Activated B cell treated with CpG ODN at 0.5 μM for 24 hours (primary cell): ENCODE measurements at regions of chr22 and their contacts with region 1.

Region 1: GRCh38 chr22:30591588-30592359 is at the start of gene PES1:
- DNase-seq: peak; percentile 87
- ATAC-seq: peak; percentile 95
- H3K4me3 Mint-ChIP-seq: no peak within 1 kb of the TSS
- H3K27ac Mint-ChIP-seq: no peak within 1 kb of the TSS
- H3K4me1 Mint-ChIP-seq: no peaks in the 10 kb centered on the region
- H3K27me3 Mint-ChIP-seq: peaks cover 1% of the 10 kb centered on the region
- CTCF ChIP-seq: no peak
- total RNA-seq, gene PES1: 124 TPM in 2 replicates

Region 2: DNA sequence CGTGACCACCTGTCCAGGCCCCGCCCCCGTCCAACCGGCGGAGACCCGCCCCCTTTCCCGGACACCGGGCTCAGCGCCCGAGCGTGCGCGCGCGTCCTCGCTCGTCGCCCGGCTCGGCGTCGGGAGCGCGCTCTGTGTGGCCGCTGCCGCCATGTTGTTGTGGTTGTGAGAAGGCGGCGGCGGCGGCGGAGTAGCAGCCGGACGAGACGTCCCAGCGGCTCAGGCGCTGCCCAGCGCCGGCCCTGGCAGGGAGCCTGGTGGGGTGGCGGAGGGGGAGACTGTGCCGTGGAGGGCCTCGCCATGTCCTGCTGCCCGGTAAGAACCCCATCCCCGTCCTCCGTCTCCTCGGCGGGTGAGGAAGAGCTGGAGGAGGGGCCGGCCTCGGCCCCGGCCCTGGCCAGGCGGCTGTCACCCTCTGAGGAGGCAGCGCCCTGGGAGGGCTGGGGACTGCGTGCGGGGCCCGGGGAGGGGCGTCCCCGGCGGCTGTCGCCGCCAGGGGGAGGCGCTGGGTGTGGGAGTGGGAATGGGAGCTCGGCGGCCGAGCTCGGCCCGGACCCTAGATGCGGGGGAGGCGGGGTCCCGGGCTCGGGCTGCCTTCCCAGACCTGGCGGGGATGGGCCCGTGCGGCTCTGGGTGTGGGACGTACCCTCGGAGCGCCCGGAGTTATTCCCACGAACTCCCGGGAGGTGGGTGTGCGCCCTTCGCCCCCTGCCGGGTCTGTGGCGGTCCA is 708.6 kb before region 1 on chr22 and contains the start of gene MTMR3:
- CTCF ChIA-PET with region 1: no interaction called
- POLR2A ChIA-PET with region 1: no interaction called
- intact Hi-C with region 1: loop called (anchors 5 kb)
- DNase-seq: peak; percentile 98
- ATAC-seq: peak; percentile 82
- H3K4me3 Mint-ChIP-seq: peak within 1 kb of the TSS; percentile 92
- H3K27ac Mint-ChIP-seq: peak within 1 kb of the TSS; percentile 83
- H3K4me1 Mint-ChIP-seq: peaks cover 10% of the 10 kb centered on the region
- H3K27me3 Mint-ChIP-seq: peaks cover 3% of the 10 kb centered on the region
- CTCF ChIP-seq: no peak
- total RNA-seq, gene MTMR3: 34.8 and 36.6 TPM in 2 replicates

Region 3: DNA sequence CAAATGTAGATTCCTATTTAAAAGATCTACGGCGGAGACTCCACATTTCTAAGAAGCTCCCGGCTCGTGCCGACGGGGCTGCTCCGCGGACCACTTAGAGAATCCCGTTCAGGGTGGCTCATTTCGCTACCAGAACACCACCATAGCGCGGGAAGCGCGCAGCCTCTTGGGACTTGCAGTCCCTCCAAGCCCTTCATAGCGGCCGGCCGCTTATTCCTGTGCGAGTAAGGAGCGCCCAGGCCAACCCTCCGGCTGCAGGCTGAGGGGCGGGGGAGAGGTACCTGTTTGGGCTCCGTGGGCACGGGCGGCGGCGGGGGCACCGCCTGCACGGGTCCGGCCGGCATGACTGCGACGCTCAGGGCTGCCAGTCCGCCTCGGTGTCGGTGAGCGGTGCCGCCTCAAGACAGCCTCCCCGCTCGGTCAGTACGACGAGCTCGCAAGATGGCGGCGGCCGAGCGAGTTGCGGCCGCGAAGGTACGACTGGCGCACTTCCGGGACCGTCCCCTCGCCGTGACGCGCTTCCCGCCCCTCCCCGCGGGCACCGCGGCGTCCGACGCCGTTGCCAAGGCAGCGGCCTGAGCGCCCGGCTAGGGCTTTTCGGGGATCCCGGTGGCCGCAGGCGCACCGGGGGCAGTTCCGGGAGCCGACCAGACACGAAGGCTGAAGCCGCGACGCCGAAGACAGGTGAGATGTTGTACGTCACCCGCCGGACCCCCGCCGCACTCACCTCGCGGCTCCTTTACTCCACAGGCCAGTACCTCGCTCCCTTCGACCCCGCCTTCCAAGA is 235.1 kb before region 1 on chr22 and contains the starts of genes CCDC157 and SF3A1:
- CTCF ChIA-PET with region 1: no interaction called
- POLR2A ChIA-PET with region 1: interaction called, 11 read pairs
- intact Hi-C with region 1: no loop called
- DNase-seq: peak; percentile 88
- ATAC-seq: peak; percentile 86
- H3K4me3 Mint-ChIP-seq: peak within 1 kb of the TSS; percentile 92
- H3K27ac Mint-ChIP-seq: peak within 1 kb of the TSS; percentile 76
- H3K4me1 Mint-ChIP-seq: peaks cover 43% of the 10 kb centered on the region
- H3K27me3 Mint-ChIP-seq: no peaks in the 10 kb centered on the region
- CTCF ChIP-seq: no peak
- total RNA-seq, gene CCDC157: 1.8 and 2.9 TPM in 2 replicates
- total RNA-seq, gene SF3A1: 263 and 269 TPM in 2 replicates

Region 4: GRCh38 chr22:30667494-30668385 is 76.0 kb after region 1 on chr22 and contains the start of gene DUSP18:
- CTCF ChIA-PET with region 1: no interaction called
- POLR2A ChIA-PET with region 1: no interaction called
- intact Hi-C with region 1: loop called (anchors 1 kb)
- DNase-seq: peak; percentile 95
- ATAC-seq: peak; percentile 94
- H3K4me3 Mint-ChIP-seq: peak within 1 kb of the TSS; percentile 97
- H3K27ac Mint-ChIP-seq: peak within 1 kb of the TSS; percentile 86
- H3K4me1 Mint-ChIP-seq: peaks cover 18% of the 10 kb centered on the region
- H3K27me3 Mint-ChIP-seq: no peaks in the 10 kb centered on the region
- CTCF ChIP-seq: no peak
- total RNA-seq, gene DUSP18: 12.0 and 13.5 TPM in 2 replicates

Region 5: DNA sequence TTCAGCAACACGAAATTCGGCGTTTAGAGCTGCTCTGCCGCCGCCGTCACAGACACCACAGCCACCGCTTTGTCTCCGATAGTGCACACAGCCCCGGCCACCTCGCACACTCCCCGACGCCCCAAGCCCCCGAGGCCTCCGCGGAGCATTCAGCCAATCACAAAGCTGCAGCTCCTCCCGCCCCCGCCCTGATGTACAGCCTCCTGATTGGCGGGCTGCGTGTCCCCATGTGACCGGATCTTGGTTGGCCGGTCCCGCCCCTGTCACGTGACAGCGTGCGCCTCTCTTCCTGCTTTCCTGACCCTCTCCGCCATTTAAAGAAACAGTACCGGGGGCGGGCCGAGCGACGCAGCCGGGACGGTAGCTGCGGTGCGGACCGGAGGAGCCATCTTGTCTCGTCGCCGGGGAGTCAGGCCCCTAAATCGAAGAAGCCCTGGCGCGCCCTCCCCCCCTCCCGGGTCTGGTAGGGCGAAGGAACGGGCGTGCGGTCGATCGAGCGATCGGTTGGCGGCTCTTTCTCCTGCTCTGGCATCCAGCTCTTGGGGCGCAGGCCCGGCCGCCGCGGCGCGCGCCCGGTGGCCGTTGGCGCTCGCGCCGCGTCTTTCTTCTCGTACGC is 377.3 kb after region 1 on chr22 and contains the start of gene TUG1:
- CTCF ChIA-PET with region 1: no interaction called
- POLR2A ChIA-PET with region 1: interaction called, 8 read pairs
- intact Hi-C with region 1: loop called (anchors 1 kb)
- DNase-seq: peak; percentile 93
- ATAC-seq: peak; percentile 92
- H3K4me3 Mint-ChIP-seq: peak within 1 kb of the TSS; percentile 95
- H3K27ac Mint-ChIP-seq: peak within 1 kb of the TSS; percentile 94
- H3K4me1 Mint-ChIP-seq: peaks cover 56% of the 10 kb centered on the region
- H3K27me3 Mint-ChIP-seq: no peaks in the 10 kb centered on the region
- CTCF ChIP-seq: no peak
- total RNA-seq, gene TUG1: 70.4 and 83.0 TPM in 2 replicates

Region 6: GRCh38 chr22:31107178-31107893 is 515.6 kb after region 1 on chr22 and contains the start of gene SELENOM:
- CTCF ChIA-PET with region 1: no interaction called
- POLR2A ChIA-PET with region 1: no interaction called
- intact Hi-C with region 1: loop called (anchors 5 kb)
- DNase-seq: peak; percentile 76
- ATAC-seq: peak; percentile 97
- H3K4me3 Mint-ChIP-seq: peak within 1 kb of the TSS; percentile 93
- H3K27ac Mint-ChIP-seq: peak within 1 kb of the TSS; percentile 80
- H3K4me1 Mint-ChIP-seq: peaks cover 23% of the 10 kb centered on the region
- H3K27me3 Mint-ChIP-seq: no peaks in the 10 kb centered on the region
- CTCF ChIP-seq: no peak
- total RNA-seq, gene SELENOM: 9.0 and 9.5 TPM in 2 replicates